AG04450 (cell line): ENCODE measurements at regions of chr1 and their contacts with region 1.

Region 1: GRCh38 chr1:27031235-27032118 is 18.8 kb upstream of the TENT5B start:
- DNase-seq: peak; percentile 34
- H3K4me3 ChIP-seq: peak overlapping the region; percentile 41
- H3K27ac ChIP-seq: peak overlapping the region; percentile 31
- H3K27me3 ChIP-seq: peaks cover 2% of the 10 kb centered on the region
- CTCF ChIP-seq: no peak

Region 2: DNA sequence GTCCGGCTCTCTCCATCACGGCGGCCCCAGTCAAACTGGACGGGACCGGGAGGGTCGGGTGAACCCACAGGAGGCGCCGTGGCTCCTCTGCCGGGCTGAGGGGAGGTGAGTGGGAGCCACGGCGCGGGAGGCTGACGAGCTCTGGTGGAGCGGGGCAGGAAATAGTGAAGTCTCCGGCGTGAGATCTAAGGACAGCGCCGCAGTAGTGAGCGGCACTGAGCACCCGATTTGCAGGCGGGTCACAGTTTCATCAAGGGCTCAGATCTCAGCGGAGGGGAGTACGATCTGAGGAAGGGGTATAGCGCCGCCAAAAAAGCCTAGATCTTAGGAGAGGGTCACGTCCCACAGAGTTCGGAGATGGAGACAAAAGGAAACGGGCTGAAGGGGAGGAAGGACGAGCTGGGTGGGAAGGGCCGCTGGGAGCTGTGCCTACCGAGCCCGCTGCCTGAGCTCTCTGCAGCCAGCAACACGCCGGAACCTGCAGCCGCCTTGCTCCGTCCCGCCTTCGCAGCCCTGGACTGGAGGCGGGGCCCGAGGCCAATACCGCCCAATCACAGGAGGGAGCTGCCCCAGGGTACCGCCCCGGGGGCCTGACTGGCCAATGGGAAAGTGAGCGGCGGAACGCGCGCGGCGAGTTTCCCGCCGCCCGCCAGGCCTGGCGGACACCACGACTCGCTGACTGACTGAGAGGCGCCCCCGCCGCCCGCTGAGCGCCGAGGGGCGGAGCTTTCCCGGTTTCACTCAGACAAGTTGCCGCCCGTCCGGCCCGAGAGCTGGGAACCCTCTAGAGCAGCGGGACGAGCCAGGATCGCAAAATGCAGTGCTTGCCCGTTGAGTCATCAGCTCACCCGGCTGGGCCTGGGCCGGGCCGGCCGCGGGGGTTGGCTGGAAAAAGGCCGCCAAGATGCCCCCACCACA is 166.6 kb before region 1 on chr1:
- CTCF ChIA-PET with region 1: no interaction called
- POLR2A ChIA-PET with region 1: no interaction called
- DNase-seq: peak; percentile 96
- H3K4me3 ChIP-seq: peak overlapping the region; percentile 73
- H3K27ac ChIP-seq: peak overlapping the region; percentile 97
- H3K27me3 ChIP-seq: no peaks in the 10 kb centered on the region
- CTCF ChIP-seq: no peak

Region 3: GRCh38 chr1:27058966-27059669 is 27.6 kb after region 1 on chr1:
- CTCF ChIA-PET with region 1: no interaction called
- POLR2A ChIA-PET with region 1: no interaction called
- DNase-seq: no peak
- H3K4me3 ChIP-seq: no peak overlapping the region
- H3K27ac ChIP-seq: no peak overlapping the region
- H3K27me3 ChIP-seq: peaks cover 12% of the 10 kb centered on the region
- CTCF ChIP-seq: no peak

Region 4: DNA sequence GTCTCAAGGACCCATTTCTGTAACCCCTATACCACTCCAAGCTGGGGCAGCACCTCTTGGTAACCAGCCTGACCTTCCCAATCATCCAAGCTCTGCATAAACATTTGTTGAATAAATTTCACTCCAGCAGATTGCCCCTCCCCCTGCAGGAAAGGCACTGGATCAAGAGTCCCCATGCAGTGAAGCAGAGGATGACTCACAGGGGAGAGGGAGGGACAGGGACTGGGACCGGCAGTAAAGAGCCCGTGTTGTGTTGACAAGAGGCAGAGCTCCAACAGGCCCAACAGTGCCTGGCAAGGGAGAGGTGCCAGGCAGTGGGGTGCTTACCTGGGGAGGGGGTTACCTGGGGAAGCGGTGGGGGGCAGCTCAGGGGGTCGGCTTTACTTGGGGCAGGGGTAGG is 91.2 kb after region 1 on chr1:
- CTCF ChIA-PET with region 1: no interaction called
- POLR2A ChIA-PET with region 1: no interaction called
- DNase-seq: no peak
- H3K4me3 ChIP-seq: no peak overlapping the region
- H3K27ac ChIP-seq: no peak overlapping the region
- H3K27me3 ChIP-seq: no peaks in the 10 kb centered on the region
- CTCF ChIP-seq: no peak

Region 5: GRCh38 chr1:27139980-27140379 is 108.5 kb after region 1 on chr1:
- CTCF ChIA-PET with region 1: interaction called, 11 read pairs
- POLR2A ChIA-PET with region 1: no interaction called
- DNase-seq: no peak
- H3K4me3 ChIP-seq: no peak overlapping the region
- H3K27ac ChIP-seq: no peak overlapping the region
- H3K27me3 ChIP-seq: no peaks in the 10 kb centered on the region
- CTCF ChIP-seq: no peak

Region 6: GRCh38 chr1:27145934-27146354 is 114.5 kb after region 1 on chr1:
- CTCF ChIA-PET with region 1: no interaction called
- POLR2A ChIA-PET with region 1: interaction called, 14 read pairs
- DNase-seq: peak; percentile 61
- H3K4me3 ChIP-seq: no peak overlapping the region
- H3K27ac ChIP-seq: peak overlapping the region; percentile 84
- H3K27me3 ChIP-seq: no peaks in the 10 kb centered on the region
- CTCF ChIP-seq: no peak